ENCODE measurements at regions of chr18 and their contacts with region 1.

Region 1: GRCh38 chr18:864872-865273 is 39.8 kb upstream of the ADCYAP1 start:
- DNase-seq: peak; percentile 73
- ATAC-seq: peak; percentile 85
- H3K4me3 Mint-ChIP-seq: no peak overlapping the region
- H3K27ac Mint-ChIP-seq: no peak overlapping the region
- H3K4me1 Mint-ChIP-seq: peaks cover 4% of the 10 kb centered on the region
- H3K27me3 Mint-ChIP-seq: peaks cover 15% of the 10 kb centered on the region

Region 2: GRCh38 chr18:875912-876311 is 11.0 kb after region 1 on chr18:
- CTCF ChIA-PET with region 1: interaction called, 11 read pairs
- POLR2A ChIA-PET with region 1: no interaction called
- DNase-seq: no peak
- ATAC-seq: no peak
- H3K4me3 Mint-ChIP-seq: no peak overlapping the region
- H3K27ac Mint-ChIP-seq: no peak overlapping the region
- H3K4me1 Mint-ChIP-seq: peaks cover 14% of the 10 kb centered on the region
- H3K27me3 Mint-ChIP-seq: peaks cover 6% of the 10 kb centered on the region

Region 3: GRCh38 chr18:961644-962355 is 96.9 kb after region 1 on chr18:
- CTCF ChIA-PET with region 1: interaction called, 28 read pairs
- POLR2A ChIA-PET with region 1: no interaction called
- DNase-seq: peak; percentile 67
- ATAC-seq: no peak
- H3K4me3 Mint-ChIP-seq: no peak overlapping the region
- H3K27ac Mint-ChIP-seq: no peak overlapping the region
- H3K4me1 Mint-ChIP-seq: no peaks in the 10 kb centered on the region
- H3K27me3 Mint-ChIP-seq: peaks cover 8% of the 10 kb centered on the region

Measured in activated CD8-positive, alpha-beta T cell treated with anti-CD3 and anti-CD28 coated beads, Interleukin-2, amount 10 ng/mL, durations not matched to agents 7 days and 5 days (primary cell).